ENCODE measurements at regions of chrX and their contacts with region 1.

Region 1: DNA sequence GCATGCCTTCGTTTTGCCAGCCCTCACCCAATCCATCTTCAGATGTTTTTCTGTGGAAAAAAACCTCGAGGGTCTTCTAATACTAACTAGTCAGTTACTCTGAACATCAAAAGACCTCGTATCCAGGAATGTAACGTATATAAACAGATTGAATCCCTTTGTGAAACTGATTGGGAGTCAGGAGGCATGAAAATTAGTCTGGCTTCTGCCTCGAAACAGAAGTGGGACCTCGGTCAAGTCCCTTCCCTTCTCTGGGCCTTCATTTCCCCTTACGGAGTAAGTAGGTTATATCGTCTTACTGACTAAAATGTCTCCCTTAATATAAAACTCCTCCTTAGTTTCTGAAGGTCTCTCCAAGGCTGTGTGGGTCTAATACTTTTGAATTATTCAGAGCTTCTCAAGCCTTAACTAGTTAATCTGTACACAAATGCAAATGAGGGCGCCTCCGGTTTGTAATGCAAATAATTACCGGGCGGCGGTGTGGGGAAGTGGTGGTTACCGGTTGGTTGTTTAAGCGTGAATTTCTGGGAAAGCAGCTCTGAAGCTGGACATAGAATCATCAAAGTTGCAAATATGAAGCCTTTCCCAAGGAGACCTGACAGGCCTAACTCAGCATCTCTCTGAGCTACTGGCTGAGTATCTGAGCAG is 11.4 kb upstream of the NKRF start:
- DNase-seq: no peak
- H3K4me3 ChIP-seq: no peak overlapping the region
- H3K27ac ChIP-seq: no peak overlapping the region
- H3K4me1 ChIP-seq: no peaks in the 10 kb centered on the region
- H3K27me3 ChIP-seq: no peaks in the 10 kb centered on the region
- CTCF ChIP-seq: no peak

Region 2: GRCh38 chrX:119871599-119872395 is 254.2 kb after region 1 on chrX and contains the starts of genes NDUFA1 and RNF113A:
- CTCF ChIA-PET with region 1: no interaction called
- dilution Hi-C with region 1: no loop called
- in situ Hi-C with region 1: no loop called
- intact Hi-C with region 1: loop called (anchors 10 kb)
- DNase-seq: peak; percentile 84
- H3K4me3 ChIP-seq: peak within 1 kb of the TSS; percentile 49 to 74 (median 55)
- H3K27ac ChIP-seq: peak within 1 kb of the TSS; percentile 82
- H3K4me1 ChIP-seq: no peaks in the 10 kb centered on the region
- H3K27me3 ChIP-seq: no peaks in the 10 kb centered on the region
- CTCF ChIP-seq: no peak
- total RNA-seq, gene NDUFA1: 28.3 to 82.0 TPM
- total RNA-seq, gene RNF113A: 10.5 to 15.2 TPM

Region 3: GRCh38 chrX:119887721-119888425 is 270.2 kb after region 1 on chrX:
- CTCF ChIA-PET with region 1: interaction called, 29 read pairs
- dilution Hi-C with region 1: no loop called
- in situ Hi-C with region 1: no loop called
- intact Hi-C with region 1: no loop called
- DNase-seq: no peak
- H3K4me3 ChIP-seq: peak overlapping the region in 2 of 3 experiments; percentile 12 to 29
- H3K27ac ChIP-seq: no peak overlapping the region
- H3K4me1 ChIP-seq: no peaks in the 10 kb centered on the region
- H3K27me3 ChIP-seq: no peaks in the 10 kb centered on the region
- CTCF ChIP-seq: peak; percentile 48

Measured in mammary epithelial cell (primary cell).